Transverse colon (tissue), 4 donors: ENCODE measurements at regions of chr3 and their contacts with region 1.

Region 1: GRCh38 chr3:133464573-133464972 is 64.7 kb downstream of the BFSP2 start:
- DNase-seq: no peak
- H3K4me3 ChIP-seq: no peak overlapping the region
- H3K27ac ChIP-seq: no peak overlapping the region
- H3K4me1 ChIP-seq: peaks cover 0 to 15% (median 10%) of the 10 kb centered on the region in 4 donors
- H3K27me3 ChIP-seq: no peaks in the 10 kb centered on the region
- CTCF ChIP-seq: peak in 2 of 5 experiments; percentile 13 to 16
- EP300 ChIP-seq: no peak
- POLR2A ChIP-seq: no peak

Region 2: GRCh38 chr3:133441867-133442270 is 22.7 kb before region 1 on chr3:
- in situ Hi-C with region 1: no loop called
- intact Hi-C with region 1: no loop called
- DNase-seq: no peak
- H3K4me3 ChIP-seq: peak overlapping the region in 1 of 4 donors; percentile 13
- H3K27ac ChIP-seq: peak overlapping the region in 1 of 4 donors; percentile 7
- H3K4me1 ChIP-seq: peaks cover 0 to 6% (median 1%) of the 10 kb centered on the region in 4 donors
- H3K27me3 ChIP-seq: no peaks in the 10 kb centered on the region
- CTCF ChIP-seq: no peak
- EP300 ChIP-seq: no peak
- POLR2A ChIP-seq: no peak

Region 3: GRCh38 chr3:133573054-133573628 is 108.6 kb after region 1 on chr3:
- in situ Hi-C with region 1: loop called in 2 of 4 experiments (anchors 10 to 25 kb)
- intact Hi-C with region 1: no loop called
- DNase-seq: peak; percentile 100
- H3K4me3 ChIP-seq: peak overlapping the region in 3 of 4 donors; percentile 84 to 94 (median 92)
- H3K27ac ChIP-seq: peak overlapping the region; percentile 96 to 100 (median 99)
- H3K4me1 ChIP-seq: peaks cover 7 to 49% (median 29%) of the 10 kb centered on the region in 4 donors
- H3K27me3 ChIP-seq: no peaks in the 10 kb centered on the region
- CTCF ChIP-seq: peak in 4 of 5 experiments; percentile 21 to 45 (median 26)
- EP300 ChIP-seq: no peak
- POLR2A ChIP-seq: peak; percentile 17

Region 4: GRCh38 chr3:133578548-133579191 is 114.1 kb after region 1 on chr3:
- in situ Hi-C with region 1: loop called in 2 of 4 experiments (anchors 10 to 25 kb)
- intact Hi-C with region 1: no loop called
- DNase-seq: no peak
- H3K4me3 ChIP-seq: no peak overlapping the region
- H3K27ac ChIP-seq: no peak overlapping the region
- H3K4me1 ChIP-seq: peaks cover 15 to 64% (median 39%) of the 10 kb centered on the region in 4 donors
- H3K27me3 ChIP-seq: no peaks in the 10 kb centered on the region
- CTCF ChIP-seq: peak; percentile 34 to 53 (median 46)
- EP300 ChIP-seq: no peak
- POLR2A ChIP-seq: no peak

Region 5: GRCh38 chr3:134048278-134049011 is 583.9 kb after region 1 on chr3:
- in situ Hi-C with region 1: no loop called
- intact Hi-C with region 1: no loop called
- DNase-seq: no peak
- H3K4me3 ChIP-seq: no peak overlapping the region
- H3K27ac ChIP-seq: no peak overlapping the region
- H3K4me1 ChIP-seq: no peaks in the 10 kb centered on the region
- H3K27me3 ChIP-seq: no peaks in the 10 kb centered on the region
- CTCF ChIP-seq: no peak
- EP300 ChIP-seq: no peak
- POLR2A ChIP-seq: no peak